PC-9 (cell line): ENCODE measurements at regions of chr20 and their contacts with region 1.

Region 1: GRCh38 chr20:48904365-48905296 is 16.9 kb upstream of the ARFGEF2 start:
- DNase-seq: peak; percentile 75
- H3K4me3 ChIP-seq: no peak overlapping the region
- H3K27ac ChIP-seq: no peak overlapping the region
- H3K4me1 ChIP-seq: peaks cover 24% of the 10 kb centered on the region
- H3K27me3 ChIP-seq: no peaks in the 10 kb centered on the region
- CTCF ChIP-seq: peak; percentile 98

Region 2: GRCh38 chr20:48635433-48636310 is 269.0 kb before region 1 on chr20:
- CTCF ChIA-PET with region 1: interaction called, 3 read pairs
- POLR2A ChIA-PET with region 1: no interaction called
- intact Hi-C with region 1: loop called (anchors 1 kb)
- DNase-seq: peak; percentile 50 to 77
- H3K4me3 ChIP-seq: no peak overlapping the region
- H3K27ac ChIP-seq: no peak overlapping the region
- H3K4me1 ChIP-seq: peaks cover 15% of the 10 kb centered on the region
- H3K27me3 ChIP-seq: no peaks in the 10 kb centered on the region
- CTCF ChIP-seq: peak; percentile 98

Region 3: GRCh38 chr20:48657475-48658470 is 246.9 kb before region 1 on chr20:
- CTCF ChIA-PET with region 1: interaction called, 39 read pairs
- POLR2A ChIA-PET with region 1: interaction called, 13 read pairs
- intact Hi-C with region 1: loop called (anchors 1 kb)
- DNase-seq: peak; percentile 67 to 73
- H3K4me3 ChIP-seq: no peak overlapping the region
- H3K27ac ChIP-seq: no peak overlapping the region
- H3K4me1 ChIP-seq: no peaks in the 10 kb centered on the region
- H3K27me3 ChIP-seq: no peaks in the 10 kb centered on the region
- CTCF ChIP-seq: peak; percentile 98

Region 4: GRCh38 chr20:48771515-48771914 is 133.1 kb before region 1 on chr20:
- CTCF ChIA-PET with region 1: interaction called, 14 read pairs
- POLR2A ChIA-PET with region 1: no interaction called
- intact Hi-C with region 1: no loop called
- DNase-seq: no peak
- H3K4me3 ChIP-seq: no peak overlapping the region
- H3K27ac ChIP-seq: no peak overlapping the region
- H3K4me1 ChIP-seq: no peaks in the 10 kb centered on the region
- H3K27me3 ChIP-seq: no peaks in the 10 kb centered on the region
- CTCF ChIP-seq: no peak

Region 5: DNA sequence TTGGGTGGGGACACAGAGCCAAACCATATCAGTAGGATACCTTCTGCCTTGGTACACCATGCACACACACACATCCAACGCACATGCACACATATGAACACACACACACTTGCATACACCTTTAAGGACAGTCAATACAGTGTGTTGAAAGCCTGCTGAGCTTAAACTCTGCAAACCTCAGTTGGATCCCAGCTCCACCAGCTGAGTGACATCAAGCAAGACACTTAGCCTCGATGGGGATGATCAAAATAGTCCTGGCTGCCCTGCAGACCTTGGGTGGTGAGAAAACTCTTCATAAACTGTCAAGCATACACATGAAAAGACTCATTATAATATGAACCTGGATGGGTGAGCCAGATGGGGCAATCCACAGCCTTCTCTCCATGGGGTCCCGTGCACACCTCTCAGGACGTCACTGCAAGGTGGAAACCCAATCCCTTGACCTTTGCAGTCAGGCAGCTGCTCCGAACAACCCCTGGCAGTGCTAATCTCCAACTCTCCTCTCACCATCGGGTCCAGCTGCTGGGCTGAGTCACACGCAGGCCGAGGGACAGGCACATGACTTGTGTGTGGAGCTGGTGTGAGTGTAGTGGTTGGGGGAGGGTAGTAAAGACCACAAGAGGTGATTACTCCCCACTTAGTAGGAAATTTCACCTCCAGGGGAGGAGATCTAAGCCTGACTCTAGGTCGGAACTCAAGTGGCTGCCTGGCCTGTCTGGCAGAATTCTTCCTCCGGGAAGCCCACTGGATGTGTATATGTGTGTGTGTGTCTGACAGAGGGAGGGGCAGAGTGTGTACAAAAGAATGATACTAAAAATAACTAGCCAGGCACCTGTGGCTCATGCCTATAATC is 50.8 kb before region 1 on chr20:
- CTCF ChIA-PET with region 1: interaction called, 13 read pairs
- POLR2A ChIA-PET with region 1: no interaction called
- intact Hi-C with region 1: no loop called
- DNase-seq: peak in 1 of 2 experiments; percentile 34
- H3K4me3 ChIP-seq: no peak overlapping the region
- H3K27ac ChIP-seq: no peak overlapping the region
- H3K4me1 ChIP-seq: no peaks in the 10 kb centered on the region
- H3K27me3 ChIP-seq: no peaks in the 10 kb centered on the region
- CTCF ChIP-seq: no peak